PC-3 (cell line): ENCODE measurements at regions of chr16 and their contacts with region 1.

Region 1: GRCh38 chr16:89860747-89861304 is 12.6 kb upstream of the TCF25 start:
- DNase-seq: peak; percentile 65
- ATAC-seq: peak; percentile 79
- H3K4me3 ChIP-seq: no peak overlapping the region
- H3K27ac ChIP-seq: no peak overlapping the region
- H3K4me1 ChIP-seq: peaks cover 16% of the 10 kb centered on the region
- H3K27me3 ChIP-seq: no peaks in the 10 kb centered on the region
- CTCF ChIP-seq: peak; percentile 87

Region 2: DNA sequence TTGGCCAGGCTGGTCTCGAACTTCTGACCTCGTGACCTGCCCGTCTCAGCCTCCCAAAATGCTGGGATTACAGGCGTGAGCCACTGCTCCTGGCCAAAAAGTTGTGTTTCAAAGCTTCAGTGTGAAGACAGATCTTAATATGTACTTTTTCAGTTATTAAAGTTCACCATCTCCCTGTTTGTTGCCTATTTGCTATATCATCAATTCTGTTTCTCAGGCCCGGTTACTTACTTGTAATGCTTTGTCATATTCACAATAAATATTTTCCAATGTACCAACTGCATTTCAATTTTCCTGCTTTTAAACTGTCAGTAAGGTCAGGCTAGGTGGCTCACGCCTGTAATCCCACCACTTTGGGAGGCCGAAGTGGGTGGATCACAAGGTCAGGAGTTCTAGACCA is 66.9 kb before region 1 on chr16:
- CTCF ChIA-PET with region 1: no interaction called
- POLR2A ChIA-PET with region 1: no interaction called
- intact Hi-C with region 1: loop called (anchors 2 kb)
- DNase-seq: no peak
- ATAC-seq: no peak
- H3K4me3 ChIP-seq: no peak overlapping the region
- H3K27ac ChIP-seq: no peak overlapping the region
- H3K4me1 ChIP-seq: no peaks in the 10 kb centered on the region
- H3K27me3 ChIP-seq: no peaks in the 10 kb centered on the region
- CTCF ChIP-seq: no peak

Region 3: GRCh38 chr16:89815639-89816348 is 45.0 kb before region 1 on chr16:
- CTCF ChIA-PET with region 1: interaction called, 4 read pairs
- POLR2A ChIA-PET with region 1: no interaction called
- intact Hi-C with region 1: loop called (anchors 2 kb)
- DNase-seq: peak; percentile 15
- ATAC-seq: peak; percentile 25
- H3K4me3 ChIP-seq: peak overlapping the region; percentile 89
- H3K27ac ChIP-seq: no peak overlapping the region
- H3K4me1 ChIP-seq: peaks cover 21% of the 10 kb centered on the region
- H3K27me3 ChIP-seq: no peaks in the 10 kb centered on the region
- CTCF ChIP-seq: no peak

Region 4: DNA sequence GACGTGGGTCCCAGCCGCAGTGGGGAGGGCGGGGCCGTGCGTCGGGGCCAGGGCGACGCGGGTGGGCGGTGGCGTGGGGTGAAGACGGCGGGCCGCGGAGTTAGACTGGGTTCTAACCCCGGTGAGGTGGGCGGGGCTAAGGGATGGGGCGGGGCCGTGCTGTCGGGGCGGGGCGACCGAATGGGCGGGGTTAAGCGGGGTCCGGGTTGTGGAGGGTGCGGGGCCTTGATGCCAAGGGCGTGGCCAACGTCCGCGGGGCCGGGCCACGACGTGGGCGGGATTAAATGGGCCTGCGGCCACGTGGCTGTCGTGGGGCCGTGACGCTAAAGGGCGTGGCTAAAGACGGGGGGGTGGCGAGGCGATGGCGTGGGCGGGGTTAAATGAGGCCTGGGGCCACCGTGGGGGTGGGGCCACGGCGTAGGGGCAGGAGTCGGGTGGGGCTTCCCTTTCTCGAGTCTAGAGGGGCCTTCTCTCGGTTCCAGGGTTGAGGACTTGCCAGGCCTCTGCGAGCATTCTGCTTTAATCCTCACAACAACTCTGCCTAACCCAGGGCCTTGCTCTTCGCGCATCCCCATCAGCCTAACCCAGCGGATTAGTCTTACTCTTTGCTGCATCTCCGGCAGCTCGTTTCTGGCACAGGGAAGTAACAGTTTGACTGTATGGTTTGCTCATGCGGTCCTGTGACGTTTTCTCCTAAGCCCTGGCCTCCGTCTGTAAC is 13.3 kb after region 1 on chr16:
- CTCF ChIA-PET with region 1: no interaction called
- POLR2A ChIA-PET with region 1: interaction called, 18 read pairs
- intact Hi-C with region 1: no loop called
- DNase-seq: peak; percentile 89
- ATAC-seq: peak; percentile 75
- H3K4me3 ChIP-seq: peak overlapping the region; percentile 79
- H3K27ac ChIP-seq: peak overlapping the region; percentile 98
- H3K4me1 ChIP-seq: peaks cover 17% of the 10 kb centered on the region
- H3K27me3 ChIP-seq: no peaks in the 10 kb centered on the region
- CTCF ChIP-seq: no peak